Aorta (tissue), 5 donors: ENCODE measurements at regions of chr3 and their contacts with region 1.

Region 1: GRCh38 chr3:49856181-49857005 is at the start of gene TRAIP:
- DNase-seq: peak; percentile 96 to 97
- ATAC-seq: peak; percentile 96
- H3K4me3 ChIP-seq: peak within 1 kb of the TSS; percentile 8 to 27
- H3K27ac ChIP-seq: peak within 1 kb of the TSS in 1 of 2 donors; percentile 59
- H3K4me1 ChIP-seq: no peaks in the 10 kb centered on the region
- H3K27me3 ChIP-seq: no peaks in the 10 kb centered on the region
- total RNA-seq, gene TRAIP: 0.94 to 2.6 TPM

Region 2: GRCh38 chr3:49899815-49900214 is 43.4 kb after region 1 on chr3:
- intact Hi-C with region 1: loop called in 1 of 2 experiments (anchors 1 kb)
- DNase-seq: no peak
- ATAC-seq: no peak
- H3K4me3 ChIP-seq: no peak overlapping the region
- H3K27ac ChIP-seq: no peak overlapping the region
- H3K4me1 ChIP-seq: peaks cover 0 to 3% of the 10 kb centered on the region in 2 donors
- H3K27me3 ChIP-seq: no peaks in the 10 kb centered on the region

Region 3: GRCh38 chr3:49916686-49917085 is 60.3 kb after region 1 on chr3:
- intact Hi-C with region 1: no loop called
- DNase-seq: no peak
- ATAC-seq: no peak
- H3K4me3 ChIP-seq: no peak overlapping the region
- H3K27ac ChIP-seq: no peak overlapping the region
- H3K4me1 ChIP-seq: no peaks in the 10 kb centered on the region
- H3K27me3 ChIP-seq: no peaks in the 10 kb centered on the region